Activated naive CD8-positive, alpha-beta T cell treated with anti-CD3 and anti-CD28 coated beads, Interleukin-2, amount 10 ng/mL, durations not matched to agents 7 days and 5 days (primary cell): ENCODE measurements at regions of chr19 and their contacts with region 1.

Region 1: GRCh38 chr19:54916822-54917221 is 10.9 kb downstream of the NCR1 start:
- DNase-seq: no peak
- ATAC-seq: no peak
- H3K4me3 Mint-ChIP-seq: no peak overlapping the region
- H3K27ac Mint-ChIP-seq: peak overlapping the region; percentile 21
- H3K4me1 Mint-ChIP-seq: peaks cover 12% of the 10 kb centered on the region
- H3K27me3 Mint-ChIP-seq: peaks cover 5% of the 10 kb centered on the region

Region 2: GRCh38 chr19:54882758-54883157 is 34.1 kb before region 1 on chr19:
- POLR2A ChIA-PET with region 1: no interaction called
- DNase-seq: peak; percentile 45
- ATAC-seq: peak; percentile 87
- H3K4me3 Mint-ChIP-seq: peak overlapping the region; percentile 76
- H3K27ac Mint-ChIP-seq: peak overlapping the region; percentile 90
- H3K4me1 Mint-ChIP-seq: peaks cover 9% of the 10 kb centered on the region
- H3K27me3 Mint-ChIP-seq: peaks cover 24% of the 10 kb centered on the region

Region 3: DNA sequence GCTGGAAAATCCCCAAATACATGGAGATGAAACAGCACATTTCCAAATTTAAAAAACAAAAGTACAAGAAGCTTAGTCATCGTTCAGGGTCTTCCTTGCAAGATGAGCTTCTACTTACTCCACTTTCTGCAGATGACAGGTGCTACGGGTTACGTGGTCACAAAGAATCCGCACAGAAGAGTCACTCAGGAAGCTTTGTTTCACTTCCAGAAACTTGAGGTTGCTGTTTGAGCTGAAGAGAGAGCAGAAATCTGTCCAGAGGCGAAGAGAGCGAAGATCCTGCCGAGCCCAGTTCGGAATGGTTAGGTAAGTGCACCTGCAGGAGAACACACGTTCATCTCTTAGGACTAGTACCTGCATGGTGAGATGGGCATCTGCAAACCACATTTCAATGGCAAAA is 21.1 kb after region 1 on chr19:
- POLR2A ChIA-PET with region 1: interaction called, 10 read pairs
- DNase-seq: peak; percentile 34
- ATAC-seq: peak; percentile 70
- H3K4me3 Mint-ChIP-seq: peak overlapping the region; percentile 47
- H3K27ac Mint-ChIP-seq: peak overlapping the region; percentile 79
- H3K4me1 Mint-ChIP-seq: peaks cover 13% of the 10 kb centered on the region
- H3K27me3 Mint-ChIP-seq: peaks cover 32% of the 10 kb centered on the region